ENCODE measurements at regions of chr10 and their contacts with region 1.

Region 1: GRCh38 chr10:27446091-27446918 is 57.8 kb upstream of the RAB18 start:
- DNase-seq: no peak

Region 2: DNA sequence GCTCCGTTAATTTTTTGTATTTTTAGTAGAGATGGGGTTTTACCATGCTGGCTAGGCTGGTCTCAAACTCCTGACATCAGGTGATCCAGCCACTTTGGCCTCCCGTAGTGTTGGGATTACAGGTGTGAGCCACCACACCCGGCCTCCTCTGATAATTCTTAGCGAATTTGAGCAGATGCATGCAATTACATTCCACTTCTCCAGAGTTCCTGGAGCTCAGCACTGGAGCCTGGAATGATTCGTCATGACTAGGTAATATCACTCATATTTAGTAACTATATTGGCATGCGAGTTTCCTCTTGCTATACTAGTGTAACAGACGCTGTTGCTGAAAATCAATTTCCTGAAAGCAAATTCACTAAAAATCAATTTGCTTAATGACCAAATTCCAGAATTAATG is 212.5 kb after region 1 on chr10:
- intact Hi-C with region 1: loop called (anchors 5 kb)
- DNase-seq: no peak

Region 3: DNA sequence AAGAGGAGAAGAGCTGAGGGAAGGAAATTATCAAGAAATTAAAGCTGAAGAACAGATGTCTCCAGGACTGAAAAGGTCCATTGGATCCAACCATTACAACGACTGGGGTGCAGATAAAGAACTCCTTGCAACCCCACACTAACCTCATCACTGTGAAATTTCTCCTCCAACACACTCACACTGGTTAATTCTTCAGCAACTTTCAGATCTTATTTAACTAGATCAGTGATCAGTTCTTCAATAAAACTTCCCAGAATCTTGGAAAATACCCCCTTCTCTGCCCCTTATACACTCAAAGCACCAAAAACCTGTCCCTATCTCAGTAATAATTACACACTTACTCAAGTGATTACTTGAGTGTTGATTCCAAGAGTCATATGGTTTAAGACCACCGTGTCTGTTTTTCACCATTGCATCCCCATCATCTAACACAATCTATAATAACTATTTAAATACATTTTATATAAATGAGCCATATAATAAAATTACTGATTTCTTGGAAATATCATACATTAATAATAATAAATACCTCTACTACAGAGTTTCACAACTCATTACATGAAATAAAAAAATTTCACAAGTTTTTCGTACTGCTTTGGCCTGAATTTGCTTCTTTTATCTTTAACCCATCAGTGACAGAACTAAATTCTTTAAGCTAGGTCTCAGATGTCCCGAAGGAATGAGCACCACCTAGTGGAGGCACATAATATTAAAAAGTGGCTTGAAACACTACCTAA is 732.9 kb after region 1 on chr10:
- intact Hi-C with region 1: loop called (anchors 2 kb)
- DNase-seq: no peak

Region 4: GRCh38 chr10:28241741-28242399 is 795.6 kb after region 1 on chr10:
- intact Hi-C with region 1: loop called (anchors 5 kb)
- DNase-seq: no peak

Region 5: GRCh38 chr10:28381903-28382347 is 935.6 kb after region 1 on chr10:
- intact Hi-C with region 1: loop called (anchors 10 kb)
- DNase-seq: peak in 9 of 10 donors; percentile 32 to 87 (median 75)

Measured in posterior cingulate gyrus (tissue), 11 donors.